Posterior vena cava (tissue), 2 donors: ENCODE measurements at regions of chr1 and their contacts with region 1.

Region 1: DNA sequence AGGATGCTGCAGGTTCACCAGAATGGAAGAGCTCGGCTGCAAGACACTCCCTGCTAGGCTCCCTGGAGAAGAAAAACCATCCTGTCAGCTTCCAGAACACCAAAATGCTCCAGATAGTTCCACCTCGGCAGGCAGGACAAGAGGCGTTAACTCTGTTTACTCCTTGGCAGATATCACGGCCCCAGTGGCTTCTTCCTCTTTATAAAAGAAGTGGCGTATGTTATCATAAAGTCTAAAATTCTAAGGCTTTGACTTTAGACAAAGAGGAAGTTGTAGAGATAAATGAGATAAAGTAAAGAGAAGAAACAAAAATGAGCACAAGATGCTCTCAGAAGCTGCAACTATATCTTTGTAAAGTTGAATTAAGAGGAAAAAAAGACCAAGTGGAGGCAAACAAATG is 24.3 kb upstream of the MTF1 start:
- DNase-seq: no peak

Region 2: GRCh38 chr1:37752583-37753471 is 130.8 kb before region 1 on chr1:
- intact Hi-C with region 1: no loop called
- DNase-seq: no peak

Region 3: GRCh38 chr1:37865348-37866120 is 18.1 kb before region 1 on chr1:
- intact Hi-C with region 1: loop called in 1 of 2 experiments (anchors 1 kb)
- DNase-seq: no peak

Region 4: DNA sequence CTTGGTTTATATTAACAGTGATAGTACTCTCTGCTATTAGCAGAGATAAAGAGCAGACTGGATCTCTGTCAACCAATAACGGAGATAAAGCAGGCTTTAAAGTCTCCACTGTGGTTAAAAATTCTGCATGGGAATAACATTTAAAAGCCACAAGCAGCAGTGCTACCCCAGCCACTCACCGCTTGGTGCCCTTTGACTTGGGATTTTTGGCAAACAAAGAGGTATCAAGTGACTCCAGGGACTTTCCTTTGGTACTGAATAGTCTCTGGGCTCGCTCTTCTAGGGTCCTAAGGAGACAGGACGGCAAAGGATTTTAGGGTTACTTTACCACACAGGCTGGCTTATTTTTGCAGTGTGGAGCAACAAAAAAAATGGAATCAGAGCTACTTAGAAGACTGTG is 94.9 kb after region 1 on chr1:
- intact Hi-C with region 1: loop called (anchors 5 kb)
- DNase-seq: no peak